Heart right ventricle (tissue), 16 donors: ENCODE measurements at regions of chr7 and their contacts with region 1.

Region 1: GRCh38 chr7:45098983-45099839 is 10.4 kb upstream of the NACAD start:
- DNase-seq: no peak
- ATAC-seq: peak in 3 of 8 donors; percentile 7 to 28 (median 16)
- H3K4me3 ChIP-seq: no peak overlapping the region
- H3K27ac ChIP-seq: no peak overlapping the region
- H3K4me1 ChIP-seq: peaks cover 0 to 9% (median 0%) of the 10 kb centered on the region in 9 donors
- H3K27me3 ChIP-seq: no peaks in the 10 kb centered on the region
- CTCF ChIP-seq: no peak

Region 2: DNA sequence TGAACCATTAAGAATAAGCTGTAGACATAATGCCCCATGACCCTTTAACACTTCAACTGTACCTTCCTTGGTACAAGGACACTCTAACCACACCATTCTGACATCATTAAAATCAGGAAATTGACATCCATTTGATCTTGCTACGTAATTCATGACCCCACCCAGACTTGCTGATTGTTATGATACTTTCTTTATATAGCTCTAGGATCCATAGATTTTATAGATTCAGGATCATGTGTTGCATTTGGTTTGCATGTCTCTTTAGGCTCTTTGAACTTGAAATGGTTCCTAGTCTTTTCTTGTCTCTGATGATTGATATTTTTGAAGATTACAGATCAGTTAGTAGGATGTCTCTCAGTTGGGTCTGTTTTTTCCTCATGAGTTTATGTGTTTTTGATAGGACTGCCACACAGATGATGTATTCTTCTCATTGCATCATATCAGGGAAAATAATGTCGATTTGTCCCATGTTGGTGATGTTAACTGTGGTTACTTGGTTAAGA is 85.7 kb before region 1 on chr7:
- intact Hi-C with region 1: loop called in 1 of 10 experiments (anchors 10 kb)
- DNase-seq: no peak
- ATAC-seq: no peak
- H3K4me3 ChIP-seq: no peak overlapping the region
- H3K27ac ChIP-seq: no peak overlapping the region
- H3K4me1 ChIP-seq: peaks cover 0 to 15% (median 4%) of the 10 kb centered on the region in 9 donors
- H3K27me3 ChIP-seq: no peaks in the 10 kb centered on the region
- CTCF ChIP-seq: no peak

Region 3: GRCh38 chr7:45073786-45074527 is 25.3 kb before region 1 on chr7:
- intact Hi-C with region 1: loop called in 1 of 10 experiments (anchors 1 kb)
- DNase-seq: peak; percentile 53 to 70
- ATAC-seq: peak in 7 of 8 donors; percentile 44 to 88 (median 68)
- H3K4me3 ChIP-seq: no peak overlapping the region
- H3K27ac ChIP-seq: no peak overlapping the region
- H3K4me1 ChIP-seq: peaks cover 0 to 12% (median 3%) of the 10 kb centered on the region in 9 donors
- H3K27me3 ChIP-seq: no peaks in the 10 kb centered on the region
- CTCF ChIP-seq: no peak